Natural killer cell (primary cell): ENCODE measurements at regions of chr20 and their contacts with region 1.

Region 1: GRCh38 chr20:25057234-25058050 is 497 bp downstream of the ACSS1 start:
- DNase-seq: peak; percentile 90 to 93
- ATAC-seq: peak; percentile 62 to 78 (median 76)
- H3K4me3 ChIP-seq: peak overlapping the region; percentile 91
- H3K4me3 Mint-ChIP-seq: peak overlapping the region; percentile 86
- H3K27ac ChIP-seq: peak overlapping the region; percentile 95
- H3K27ac Mint-ChIP-seq: peak overlapping the region; percentile 90
- H3K4me1 ChIP-seq: peaks cover 55% of the 10 kb centered on the region
- H3K4me1 Mint-ChIP-seq: peaks cover 34 to 39% of the 10 kb centered on the region in 2 donors
- H3K27me3 ChIP-seq: no peaks in the 10 kb centered on the region
- H3K27me3 Mint-ChIP-seq: peaks cover under 1% of the 10 kb centered on the region in 2 donors
- CTCF ChIP-seq: no peak

Region 2: DNA sequence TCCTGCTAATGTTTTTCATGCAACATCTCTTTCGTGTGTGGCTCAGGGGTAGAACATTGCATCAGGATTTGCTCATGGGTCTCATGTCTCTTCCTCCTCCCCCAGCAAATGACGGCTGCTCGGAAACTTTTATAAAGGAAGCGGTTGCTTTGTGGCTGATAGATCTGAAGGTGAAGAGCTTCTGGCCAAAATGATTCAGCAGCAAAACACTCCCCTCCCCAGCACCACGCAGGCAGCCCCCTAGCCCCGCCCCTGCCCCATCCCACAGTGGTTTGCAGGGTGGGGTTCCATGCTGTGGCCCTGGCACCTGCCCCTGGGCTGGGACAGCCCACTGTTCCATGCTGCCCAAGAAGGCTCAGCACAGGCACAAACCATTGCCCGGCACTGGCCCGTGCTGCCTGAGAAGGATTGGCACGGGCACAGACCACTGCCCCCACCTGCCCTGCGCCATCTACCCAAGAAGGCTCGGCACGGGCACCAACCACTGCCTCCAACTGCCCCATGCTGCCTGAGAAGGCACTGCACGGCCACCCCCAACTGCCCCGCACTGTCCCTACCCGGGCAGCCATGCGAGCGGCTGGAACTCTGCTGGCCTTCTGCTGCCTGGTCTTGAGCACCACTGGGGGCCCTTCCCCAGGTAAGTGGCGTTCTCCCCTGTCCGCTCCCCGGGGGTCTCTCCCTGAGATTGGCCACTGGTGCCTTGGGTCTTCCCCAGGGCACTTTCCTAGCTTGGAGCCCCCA is 108.3 kb before region 1 on chr20 and contains the start of gene CST7:
- intact Hi-C with region 1: loop called (anchors 2 kb)
- DNase-seq: peak; percentile 84 to 92
- ATAC-seq: peak; percentile 70 to 88 (median 79)
- H3K4me3 ChIP-seq: peak within 1 kb of the TSS; percentile 88
- H3K4me3 Mint-ChIP-seq: peak within 1 kb of the TSS; percentile 95
- H3K27ac ChIP-seq: peak within 1 kb of the TSS; percentile 98
- H3K27ac Mint-ChIP-seq: peak within 1 kb of the TSS; percentile 98 to 100
- H3K4me1 ChIP-seq: peaks cover 54% of the 10 kb centered on the region
- H3K4me1 Mint-ChIP-seq: peaks cover 74 to 96% of the 10 kb centered on the region in 2 donors
- H3K27me3 ChIP-seq: no peaks in the 10 kb centered on the region
- H3K27me3 Mint-ChIP-seq: no peaks in the 10 kb centered on the region
- CTCF ChIP-seq: no peak
- total RNA-seq, gene CST7: 590 to 700 (median 619) TPM

Region 3: GRCh38 chr20:25390538-25391528 is 333.4 kb after region 1 on chr20 and contains the start of gene ABHD12:
- intact Hi-C with region 1: loop called (anchors 5 kb)
- DNase-seq: peak; percentile 87 to 96
- ATAC-seq: peak; percentile 90 to 96 (median 91)
- H3K4me3 ChIP-seq: peak within 1 kb of the TSS; percentile 54
- H3K4me3 Mint-ChIP-seq: peak within 1 kb of the TSS; percentile 90
- H3K27ac ChIP-seq: peak within 1 kb of the TSS; percentile 46
- H3K27ac Mint-ChIP-seq: peak within 1 kb of the TSS; percentile 78 to 91
- H3K4me1 ChIP-seq: peaks cover 6% of the 10 kb centered on the region
- H3K4me1 Mint-ChIP-seq: peaks cover 16 to 17% of the 10 kb centered on the region in 2 donors
- H3K27me3 ChIP-seq: no peaks in the 10 kb centered on the region
- H3K27me3 Mint-ChIP-seq: no peaks in the 10 kb centered on the region
- CTCF ChIP-seq: no peak
- total RNA-seq, gene ABHD12: 28.5 to 34.6 (median 34.5) TPM